ENCODE measurements at regions of chr4 and their contacts with region 1.

Region 1: DNA sequence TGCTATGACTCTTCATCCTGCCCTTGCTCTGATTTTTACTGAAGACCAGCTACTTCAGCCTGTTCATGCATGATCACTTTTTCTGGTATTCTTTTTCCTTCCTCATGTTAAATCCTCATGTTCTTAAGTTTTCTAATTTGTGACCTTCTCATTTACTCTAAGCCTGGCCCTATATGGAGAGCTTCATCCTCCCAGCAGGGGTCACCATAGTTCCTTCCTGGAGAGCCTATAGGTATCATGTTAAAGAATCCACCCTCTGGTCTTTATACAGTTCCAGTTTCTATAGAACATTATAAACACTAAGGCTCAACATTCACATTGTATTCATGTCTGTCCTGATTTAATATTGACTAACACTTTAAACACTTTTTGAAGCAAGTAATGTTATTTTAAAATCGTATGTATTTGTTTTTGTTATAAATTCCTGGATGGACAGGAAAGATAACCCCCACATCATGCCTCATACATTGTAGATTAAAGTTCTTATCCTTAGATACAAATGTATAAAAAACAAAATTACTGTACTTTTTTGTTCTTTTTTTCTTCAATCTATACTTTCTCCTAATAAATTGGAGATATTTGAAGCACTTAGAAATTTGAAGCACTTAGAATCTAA is 53.8 kb upstream of the OTUD4 start:
- DNase-seq: peak in 7 of 10 donors; percentile 9 to 60 (median 45)
- H3K4me3 ChIP-seq: no peak overlapping the region
- H3K27ac ChIP-seq: no peak overlapping the region
- H3K27me3 ChIP-seq: peaks cover 0 to 3% (median 0%) of the 10 kb centered on the region in 45 donors
- CTCF ChIP-seq: peak; percentile 19 to 85 (median 69)

Region 2: DNA sequence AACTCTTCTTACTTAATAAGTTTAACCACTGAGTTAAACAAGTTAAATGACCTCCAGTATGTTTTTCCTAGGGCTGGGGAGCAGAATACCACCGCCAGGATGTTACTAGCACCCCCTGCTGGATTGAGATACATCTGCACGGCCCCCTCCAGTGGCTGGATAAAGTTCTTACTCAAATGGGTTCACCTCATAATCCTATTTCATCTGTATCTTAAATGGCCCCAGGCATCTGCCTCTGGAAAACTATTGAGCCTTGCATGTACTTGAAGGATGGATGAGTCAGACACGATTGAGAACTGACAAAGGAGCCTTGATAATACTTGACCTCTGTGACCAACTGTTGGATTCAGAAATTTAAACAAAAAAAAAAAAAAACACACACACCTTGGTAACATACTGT is 323.5 kb after region 1 on chr4:
- intact Hi-C with region 1: loop called in 1 of 2 experiments (anchors 5 kb)
- DNase-seq: peak in 4 of 10 donors; percentile 25 to 58 (median 34)
- H3K4me3 ChIP-seq: no peak overlapping the region
- H3K27ac ChIP-seq: no peak overlapping the region
- H3K27me3 ChIP-seq: no peaks in the 10 kb centered on the region
- CTCF ChIP-seq: peak in 55 of 56 donors; percentile 62 to 96 (median 87)

Region 3: DNA sequence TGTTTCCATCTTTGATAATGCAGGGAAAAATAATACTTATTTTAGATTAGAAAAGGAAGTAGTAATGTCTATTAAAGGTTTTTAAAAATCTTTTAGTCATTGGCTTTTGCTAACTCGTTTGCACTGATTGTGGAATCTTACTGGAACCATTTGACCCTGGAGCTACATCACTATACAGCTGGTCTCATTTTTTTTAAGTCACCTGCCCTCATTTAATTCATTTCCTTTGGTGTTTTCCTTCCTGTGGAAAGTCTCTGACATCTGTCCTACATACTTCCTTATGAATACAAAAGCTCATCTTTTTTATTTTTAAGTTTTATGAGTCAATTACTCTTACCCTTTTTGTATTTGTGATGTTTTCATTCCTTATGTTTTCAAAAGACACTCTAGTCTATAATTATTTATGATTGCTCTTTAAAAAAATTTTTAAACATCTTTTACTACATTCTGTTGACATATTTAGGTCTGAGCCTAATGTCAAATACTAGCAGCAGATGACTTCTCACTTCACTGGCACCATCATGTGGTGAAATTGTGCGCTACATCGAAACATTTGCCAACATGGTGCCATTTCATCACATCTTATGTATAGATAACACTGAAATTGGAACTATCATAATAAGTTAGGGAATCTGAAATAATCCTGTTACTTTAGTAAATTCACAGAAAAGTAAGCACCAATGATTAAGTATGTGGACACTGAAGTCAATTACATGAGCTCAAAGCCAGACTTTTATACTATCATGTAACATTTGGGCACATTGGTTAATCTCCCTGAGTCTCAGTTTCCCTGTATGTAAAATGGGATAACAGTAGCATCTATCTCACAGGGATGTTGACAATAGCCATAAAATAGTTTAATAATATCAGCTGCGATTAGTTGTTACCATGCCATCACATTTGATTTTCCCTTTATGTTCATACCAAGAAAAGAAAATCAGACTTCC is 375.6 kb after region 1 on chr4:
- intact Hi-C with region 1: loop called in 1 of 2 experiments (anchors 5 kb)
- DNase-seq: peak; percentile 28 to 83 (median 54)
- H3K4me3 ChIP-seq: no peak overlapping the region
- H3K27ac ChIP-seq: no peak overlapping the region
- H3K27me3 ChIP-seq: no peaks in the 10 kb centered on the region
- CTCF ChIP-seq: peak in 55 of 56 donors; percentile 51 to 84 (median 74)